Activated B cell treated with CpG ODN at 0.5 μM for 24 hours (primary cell): ENCODE measurements at regions of chr17 and their contacts with region 1.

Region 1: GRCh38 chr17:67717624-67718329 is at the start of gene NOL11:
- DNase-seq: peak; percentile 98
- ATAC-seq: peak; percentile 94
- H3K4me3 Mint-ChIP-seq: peak within 1 kb of the TSS; percentile 100
- H3K27ac Mint-ChIP-seq: peak within 1 kb of the TSS; percentile 99
- H3K4me1 Mint-ChIP-seq: peaks cover 30% of the 10 kb centered on the region
- H3K27me3 Mint-ChIP-seq: no peaks in the 10 kb centered on the region
- CTCF ChIP-seq: no peak
- total RNA-seq, gene NOL11: 67.9 and 70.6 TPM in 2 replicates

Region 2: DNA sequence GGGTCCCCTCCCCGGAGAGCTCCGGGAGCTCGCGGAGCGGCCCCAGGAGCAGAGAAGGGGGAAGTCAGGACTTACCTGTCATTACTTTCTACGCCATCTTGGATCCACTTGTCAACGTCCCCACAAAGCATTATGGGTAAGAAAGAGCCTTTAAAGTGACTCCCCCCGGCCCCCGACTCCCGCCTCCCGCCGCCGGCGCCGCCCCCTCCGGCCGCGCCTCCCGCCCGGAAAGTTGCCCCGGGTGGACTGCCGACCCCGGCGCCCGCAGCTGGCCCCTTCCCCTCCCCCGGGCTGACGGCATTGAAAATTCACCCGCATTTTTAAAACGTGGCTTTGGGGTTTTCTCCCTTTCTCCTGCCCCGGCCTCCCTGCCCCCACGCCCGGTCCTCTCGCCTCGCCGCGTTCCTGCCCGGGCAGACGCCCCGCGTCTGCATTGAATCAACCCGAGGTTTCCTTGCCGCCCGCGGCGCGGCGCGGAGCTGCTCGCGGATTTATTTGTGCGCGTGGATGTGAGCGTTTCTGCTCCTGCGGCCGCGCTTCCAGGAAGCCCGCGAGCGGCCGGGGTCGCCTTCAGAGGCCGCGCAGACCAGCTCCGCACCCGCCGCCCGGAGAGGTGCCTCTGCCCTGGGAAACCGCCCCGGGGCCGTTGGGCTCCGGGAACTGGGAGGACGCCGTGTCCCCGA is 472.6 kb before region 1 on chr17 and contains the start of gene HELZ:
- CTCF ChIA-PET with region 1: no interaction called
- POLR2A ChIA-PET with region 1: no interaction called
- intact Hi-C with region 1: loop called (anchors 1 kb)
- DNase-seq: peak; percentile 72
- ATAC-seq: peak; percentile 85
- H3K4me3 Mint-ChIP-seq: peak within 1 kb of the TSS; percentile 91
- H3K27ac Mint-ChIP-seq: peak within 1 kb of the TSS; percentile 85
- H3K4me1 Mint-ChIP-seq: peaks cover 42% of the 10 kb centered on the region
- H3K27me3 Mint-ChIP-seq: peaks cover 4% of the 10 kb centered on the region
- CTCF ChIP-seq: no peak
- total RNA-seq, gene HELZ: 55.0 and 69.7 TPM in 2 replicates

Region 3: DNA sequence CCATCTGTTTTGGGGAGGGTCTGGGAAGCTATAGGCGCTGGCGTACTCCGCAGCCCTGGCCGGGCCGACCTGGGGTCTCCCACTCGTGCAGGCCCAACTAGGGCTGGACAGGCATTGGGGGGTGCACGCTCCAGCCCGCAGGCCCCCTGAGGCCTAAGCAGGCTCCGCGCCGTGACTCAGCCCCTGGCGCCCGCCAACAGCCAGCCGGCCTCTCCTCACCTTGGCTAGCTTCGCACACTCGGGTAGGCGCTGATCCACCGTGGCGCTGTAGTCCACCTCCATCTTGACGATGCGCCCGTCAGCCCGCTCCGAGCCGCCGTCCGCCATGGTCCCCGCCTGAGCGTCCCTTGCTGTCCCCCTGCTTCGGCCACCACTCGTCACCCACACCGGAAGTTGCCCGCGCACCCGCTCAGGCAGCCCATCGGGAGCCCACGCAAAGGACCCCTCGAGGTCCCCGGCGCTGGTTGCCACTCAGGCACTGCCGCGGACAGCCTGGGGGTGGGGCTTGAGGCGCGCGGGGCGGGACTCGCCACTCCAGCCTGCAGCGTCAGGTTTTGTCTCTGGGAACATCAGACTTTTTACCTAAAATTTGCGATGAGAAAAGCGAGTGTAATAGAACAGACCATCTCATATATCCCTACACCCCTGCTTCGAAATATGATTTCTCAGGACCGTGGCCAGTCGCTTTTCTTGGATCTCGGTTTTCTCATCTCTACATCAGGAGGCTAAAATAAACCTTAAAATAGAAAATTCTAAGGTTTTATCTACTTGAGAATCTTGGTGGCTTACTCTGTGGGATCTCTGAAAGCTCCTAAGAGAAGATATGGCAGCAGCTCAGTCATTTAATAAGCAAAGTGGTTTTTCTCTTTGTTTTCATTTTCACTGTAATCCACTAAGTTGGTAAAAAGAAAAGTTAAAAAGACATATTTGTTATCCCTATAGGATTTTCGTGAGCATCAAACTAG is 351.3 kb before region 1 on chr17 and contains the start of gene PSMD12:
- CTCF ChIA-PET with region 1: no interaction called
- POLR2A ChIA-PET with region 1: interaction called, 5 read pairs
- intact Hi-C with region 1: loop called (anchors 1 kb)
- DNase-seq: peak; percentile 94
- ATAC-seq: peak; percentile 98
- H3K4me3 Mint-ChIP-seq: peak within 1 kb of the TSS; percentile 91
- H3K27ac Mint-ChIP-seq: peak within 1 kb of the TSS; percentile 87
- H3K4me1 Mint-ChIP-seq: peaks cover 40% of the 10 kb centered on the region
- H3K27me3 Mint-ChIP-seq: no peaks in the 10 kb centered on the region
- CTCF ChIP-seq: no peak
- total RNA-seq, gene PSMD12: 47.3 and 54.6 TPM in 2 replicates

Region 4: DNA sequence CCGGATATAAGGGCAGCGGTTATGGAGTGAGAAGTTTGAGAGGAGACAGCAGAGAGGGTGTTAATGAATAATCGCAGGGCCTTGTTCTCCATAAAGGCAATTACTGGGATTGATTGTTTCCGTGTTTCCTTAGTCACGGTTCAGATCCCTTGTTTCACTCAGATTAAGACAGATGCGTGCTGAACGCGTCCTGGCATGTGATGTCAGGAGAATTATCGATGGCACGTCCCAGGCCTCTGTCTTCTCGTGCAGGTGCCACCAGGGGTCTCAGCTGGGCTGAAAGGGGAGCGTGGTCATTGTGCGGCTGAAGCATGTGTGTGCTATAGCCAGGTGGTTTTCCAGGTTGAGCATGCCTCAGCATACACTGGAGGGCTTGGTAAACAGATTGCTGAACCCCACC is 142.5 kb before region 1 on chr17:
- CTCF ChIA-PET with region 1: no interaction called
- POLR2A ChIA-PET with region 1: no interaction called
- intact Hi-C with region 1: loop called (anchors 1 kb)
- DNase-seq: no peak
- ATAC-seq: peak; percentile 23
- H3K4me3 Mint-ChIP-seq: peak overlapping the region; percentile 64
- H3K27ac Mint-ChIP-seq: peak overlapping the region; percentile 80
- H3K4me1 Mint-ChIP-seq: peaks cover 73% of the 10 kb centered on the region
- H3K27me3 Mint-ChIP-seq: no peaks in the 10 kb centered on the region
- CTCF ChIP-seq: no peak